Heart right ventricle (tissue), 16 donors: ENCODE measurements at regions of chr2 and their contacts with region 1.

Region 1: GRCh38 chr2:138974651-138975050 is 194.5 kb upstream of the NXPH2 start:
- DNase-seq: no peak
- ATAC-seq: no peak
- H3K4me3 ChIP-seq: no peak overlapping the region
- H3K27ac ChIP-seq: no peak overlapping the region
- H3K4me1 ChIP-seq: no peaks in the 10 kb centered on the region
- H3K27me3 ChIP-seq: no peaks in the 10 kb centered on the region
- CTCF ChIP-seq: no peak

Region 2: DNA sequence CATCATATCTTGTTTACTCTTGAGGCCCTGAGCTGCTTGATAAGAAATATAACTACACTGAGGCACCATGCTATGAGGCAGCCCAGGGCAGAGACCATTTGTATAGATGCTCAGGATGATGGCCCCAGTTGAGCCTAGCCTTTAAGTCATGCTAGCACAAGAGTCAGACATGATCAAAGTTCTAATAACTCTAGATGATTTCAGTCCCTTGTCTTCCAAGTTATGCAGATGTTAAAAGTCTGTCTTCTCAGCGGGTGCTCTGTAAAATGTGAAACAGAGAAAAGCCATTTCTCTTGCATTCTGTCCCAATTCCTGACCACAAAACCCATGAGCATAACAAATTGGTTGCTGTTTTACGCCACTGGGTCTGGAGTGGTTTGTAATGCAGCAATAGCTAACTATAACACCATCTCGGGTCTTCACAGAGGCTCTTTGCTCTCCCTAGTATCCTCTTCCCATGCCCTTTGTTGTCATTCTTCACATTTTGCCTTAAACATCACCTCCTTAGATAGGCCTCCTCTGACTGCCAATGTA is 244.1 kb before region 1 on chr2:
- intact Hi-C with region 1: loop called in 1 of 10 experiments (anchors 5 kb)
- DNase-seq: no peak
- ATAC-seq: no peak
- H3K4me3 ChIP-seq: no peak overlapping the region
- H3K27ac ChIP-seq: no peak overlapping the region
- H3K4me1 ChIP-seq: no peaks in the 10 kb centered on the region
- H3K27me3 ChIP-seq: no peaks in the 10 kb centered on the region
- CTCF ChIP-seq: no peak